ENCODE measurements at regions of chr14 and their contacts with region 1.

Region 1: GRCh38 chr14:77457522-77458290 is at the starts of genes AHSA1 and VIPAS39:
- DNase-seq: peak; percentile 92
- H3K4me3 Mint-ChIP-seq: peak within 1 kb of the TSS; percentile 100
- H3K27ac Mint-ChIP-seq: peak within 1 kb of the TSS; percentile 100
- H3K4me1 Mint-ChIP-seq: peaks cover 29% of the 10 kb centered on the region
- H3K27me3 Mint-ChIP-seq: no peaks in the 10 kb centered on the region
- total RNA-seq, gene AHSA1: 370 and 383 TPM in 2 replicates
- total RNA-seq, gene VIPAS39: 17.3 and 18.7 TPM in 2 replicates

Region 2: DNA sequence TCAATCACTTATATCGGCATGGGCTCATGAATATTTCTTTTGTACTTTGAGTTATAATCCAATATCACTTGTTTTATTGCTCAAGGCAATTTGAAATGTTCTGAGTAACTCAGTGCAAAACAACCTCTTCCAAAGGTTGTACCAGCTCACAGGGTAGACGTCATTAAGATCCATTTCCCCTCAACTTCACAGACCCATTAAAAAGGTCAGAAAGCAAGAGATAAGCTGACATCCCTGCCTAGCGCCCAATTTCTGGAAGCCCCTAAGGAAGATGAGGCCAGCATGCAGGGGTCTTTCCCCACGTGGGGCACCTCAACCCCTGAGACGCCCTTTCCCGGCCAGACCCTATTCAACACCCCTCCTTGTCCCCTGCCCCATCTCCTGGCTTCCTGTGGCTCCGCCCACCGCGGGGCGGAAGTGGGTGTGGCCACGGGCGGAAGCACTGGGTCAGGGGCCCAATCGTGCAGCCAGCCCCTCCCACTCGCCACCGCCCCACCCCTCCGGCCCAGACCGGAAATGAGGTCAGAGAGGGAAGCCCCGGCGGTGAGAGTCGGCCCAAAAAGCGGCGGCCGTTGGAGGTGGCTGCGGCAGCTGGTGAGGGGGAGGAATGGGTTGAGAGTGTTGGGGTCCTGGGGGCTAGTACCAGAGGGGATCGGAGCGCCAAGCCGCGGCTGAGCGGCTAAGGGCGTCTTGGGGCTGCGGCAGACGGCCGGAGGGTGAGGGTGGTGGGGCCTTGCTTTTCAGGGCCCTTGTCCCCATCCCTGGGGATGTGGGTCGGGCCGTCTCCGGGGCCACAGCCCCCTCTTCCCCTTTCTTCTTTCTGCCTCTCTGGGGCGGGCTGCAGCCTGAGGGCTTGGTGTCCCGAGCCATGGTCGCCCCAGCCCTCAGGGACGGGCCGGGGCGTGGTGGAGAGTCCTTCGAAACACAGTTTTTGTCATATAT is 1306.0 kb before region 1 on chr14 and contains the start of gene GPATCH2L:
- intact Hi-C with region 1: loop called (anchors 2 kb)
- DNase-seq: peak; percentile 95
- H3K4me3 Mint-ChIP-seq: peak within 1 kb of the TSS; percentile 94
- H3K27ac Mint-ChIP-seq: peak within 1 kb of the TSS; percentile 94
- H3K4me1 Mint-ChIP-seq: peaks cover 54% of the 10 kb centered on the region
- H3K27me3 Mint-ChIP-seq: peaks cover 11% of the 10 kb centered on the region
- total RNA-seq, gene GPATCH2L: 56.1 and 60.9 TPM in 2 replicates

Region 3: GRCh38 chr14:77301103-77301502 is 156.6 kb before region 1 on chr14:
- intact Hi-C with region 1: loop called (anchors 1 kb)
- DNase-seq: peak; percentile 16
- H3K4me3 Mint-ChIP-seq: no peak overlapping the region
- H3K27ac Mint-ChIP-seq: no peak overlapping the region
- H3K4me1 Mint-ChIP-seq: peaks cover 24% of the 10 kb centered on the region
- H3K27me3 Mint-ChIP-seq: no peaks in the 10 kb centered on the region

Region 4: GRCh38 chr14:77406718-77407117 is 51.0 kb before region 1 on chr14:
- intact Hi-C with region 1: no loop called
- DNase-seq: no peak
- H3K4me3 Mint-ChIP-seq: no peak overlapping the region
- H3K27ac Mint-ChIP-seq: peak overlapping the region; percentile 20
- H3K4me1 Mint-ChIP-seq: peaks cover 18% of the 10 kb centered on the region
- H3K27me3 Mint-ChIP-seq: no peaks in the 10 kb centered on the region

Region 5: DNA sequence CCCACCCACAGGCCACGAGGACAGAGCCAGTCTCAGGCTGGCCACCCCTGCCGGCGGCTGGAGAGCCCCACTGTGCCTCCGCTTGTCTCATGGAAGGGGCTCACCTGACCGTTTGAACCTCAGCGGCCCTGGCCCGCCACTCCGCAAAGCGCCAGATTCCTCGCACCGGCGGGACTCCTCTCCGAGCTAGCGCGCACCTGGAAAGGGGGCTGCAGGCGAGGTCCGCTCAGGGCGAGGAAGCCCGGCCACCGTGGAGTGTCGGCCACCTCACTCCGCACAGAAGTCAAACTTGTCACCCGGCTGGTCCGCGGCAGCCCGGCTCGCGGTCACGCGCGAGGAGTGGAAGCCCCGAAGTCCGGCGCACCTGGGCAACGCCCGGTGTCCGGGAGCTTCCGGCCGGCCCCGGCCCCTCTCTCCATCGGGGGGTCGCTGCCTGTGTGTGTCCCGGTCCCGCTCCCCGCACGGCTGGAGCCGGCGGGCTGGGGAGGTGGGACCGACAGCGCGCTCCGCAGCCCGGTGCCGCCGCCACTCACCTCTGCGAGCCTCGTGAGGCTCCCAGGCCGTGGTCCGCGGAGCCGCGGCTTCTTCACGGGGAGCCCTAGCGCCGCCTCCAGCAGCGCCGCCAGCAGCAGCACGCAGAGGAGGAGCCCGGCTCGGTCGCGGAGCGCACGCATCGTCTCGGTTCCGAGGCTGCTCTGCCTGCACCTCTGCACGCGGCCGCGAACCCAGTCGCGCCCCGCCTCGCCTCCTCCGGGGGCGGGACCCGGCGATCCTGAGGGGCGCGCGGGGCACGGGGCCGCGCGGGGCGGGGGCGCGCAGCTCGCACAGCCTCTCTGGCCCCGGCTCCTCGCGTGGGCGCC is 40.6 kb after region 1 on chr14 and contains the start of gene ISM2:
- intact Hi-C with region 1: loop called (anchors 2 kb)
- DNase-seq: peak; percentile 40
- H3K4me3 Mint-ChIP-seq: peak within 1 kb of the TSS; percentile 61
- H3K27ac Mint-ChIP-seq: no peak within 1 kb of the TSS
- H3K4me1 Mint-ChIP-seq: peaks cover 5% of the 10 kb centered on the region
- H3K27me3 Mint-ChIP-seq: peaks cover 37% of the 10 kb centered on the region
- total RNA-seq, gene ISM2: 0.08 TPM in 1 of 2 replicates, not detected in the other

Region 6: GRCh38 chr14:77707724-77708408 is 250.2 kb after region 1 on chr14 and contains the starts of genes ALKBH1 and SLIRP:
- intact Hi-C with region 1: loop called (anchors 1 kb)
- DNase-seq: peak; percentile 81
- H3K4me3 Mint-ChIP-seq: peak within 1 kb of the TSS; percentile 99
- H3K27ac Mint-ChIP-seq: peak within 1 kb of the TSS; percentile 98
- H3K4me1 Mint-ChIP-seq: peaks cover 41% of the 10 kb centered on the region
- H3K27me3 Mint-ChIP-seq: no peaks in the 10 kb centered on the region
- total RNA-seq, gene ALKBH1: 16.3 and 21.9 TPM in 2 replicates
- total RNA-seq, gene SLIRP: 177 and 178 TPM in 2 replicates

Region 7: DNA sequence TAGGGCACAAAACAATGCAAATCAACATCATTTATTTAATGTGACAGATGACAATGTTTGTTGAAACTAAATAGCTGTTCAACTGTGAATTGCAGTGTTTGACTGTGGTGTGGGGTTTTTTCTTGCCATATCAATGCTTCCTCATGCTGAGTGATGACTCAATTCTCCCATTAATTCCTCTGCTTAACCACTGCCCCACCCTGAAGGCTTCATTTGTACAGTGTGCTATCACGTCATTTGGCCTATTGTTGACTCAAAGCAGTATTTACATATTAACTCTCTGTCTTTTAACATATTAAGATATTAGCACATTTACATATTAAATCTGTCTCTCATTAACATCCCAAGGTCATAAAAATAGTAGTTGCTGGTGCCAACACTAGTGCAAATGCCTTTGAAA is 547.6 kb after region 1 on chr14:
- intact Hi-C with region 1: loop called (anchors 2 kb)
- DNase-seq: peak; percentile 40
- H3K4me3 Mint-ChIP-seq: no peak overlapping the region
- H3K27ac Mint-ChIP-seq: peak overlapping the region; percentile 49
- H3K4me1 Mint-ChIP-seq: peaks cover 28% of the 10 kb centered on the region
- H3K27me3 Mint-ChIP-seq: peaks cover 10% of the 10 kb centered on the region

Measured in activated T-helper 1 cell treated with anti-CD3 and anti-CD28 coated beads, Interleukin-12 subunit alpha, Interleukin-12 subunit beta, Interleukin-2, Interleukin-4 antibody, amounts not matched to agents 30 ng/mL and 10 ng/mL and 1 ng/mL, durations not matched to agents 14 hours and 24 hours and 36 hours (primary cell).